CD4-positive, alpha-beta memory T cell (primary cell): ENCODE measurements at regions of chr20 and their contacts with region 1.

Region 1: GRCh38 chr20:6623989-6624388 is 143.5 kb upstream of the BMP2 start:
- DNase-seq: no peak
- H3K4me3 ChIP-seq: no peak overlapping the region
- H3K4me3 Mint-ChIP-seq: no peak overlapping the region
- H3K27ac ChIP-seq: no peak overlapping the region
- H3K27ac Mint-ChIP-seq: no peak overlapping the region
- H3K4me1 ChIP-seq: no peaks in the 10 kb centered on the region
- H3K4me1 Mint-ChIP-seq: no peaks in the 10 kb centered on the region
- H3K27me3 ChIP-seq: no peaks in the 10 kb centered on the region
- H3K27me3 Mint-ChIP-seq: peaks cover 0 to 1% of the 10 kb centered on the region in 2 donors

Region 2: DNA sequence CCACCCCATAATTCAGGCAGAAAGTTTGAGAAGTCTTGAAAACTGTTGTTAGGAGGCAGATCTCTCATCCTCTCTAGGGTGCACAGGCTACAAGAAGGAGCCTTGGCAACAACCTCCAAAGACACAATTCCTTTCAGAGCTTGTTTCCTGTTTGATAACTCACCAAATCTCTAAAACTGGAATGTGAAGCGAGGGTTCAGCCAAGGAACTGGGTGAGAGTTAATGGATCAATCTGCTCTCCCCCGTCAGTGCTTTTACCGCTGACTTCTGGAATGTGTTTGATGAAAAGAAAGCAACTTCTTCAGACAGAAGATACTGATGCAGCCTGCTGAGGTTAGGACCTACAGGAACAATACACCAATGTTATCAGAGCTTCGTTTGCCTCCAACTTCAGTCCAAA is 28.3 kb before region 1 on chr20:
- CTCF ChIA-PET with region 1: no interaction called
- POLR2A ChIA-PET with region 1: no interaction called
- intact Hi-C with region 1: loop called (anchors 1 kb)
- DNase-seq: no peak
- H3K4me3 ChIP-seq: no peak overlapping the region
- H3K4me3 Mint-ChIP-seq: no peak overlapping the region
- H3K27ac ChIP-seq: no peak overlapping the region
- H3K27ac Mint-ChIP-seq: no peak overlapping the region
- H3K4me1 ChIP-seq: no peaks in the 10 kb centered on the region
- H3K4me1 Mint-ChIP-seq: no peaks in the 10 kb centered on the region
- H3K27me3 ChIP-seq: no peaks in the 10 kb centered on the region
- H3K27me3 Mint-ChIP-seq: no peaks in the 10 kb centered on the region

Region 3: GRCh38 chr20:6613280-6613861 is 10.6 kb before region 1 on chr20:
- CTCF ChIA-PET with region 1: no interaction called
- POLR2A ChIA-PET with region 1: no interaction called
- intact Hi-C with region 1: no loop called
- DNase-seq: no peak
- H3K4me3 ChIP-seq: no peak overlapping the region
- H3K4me3 Mint-ChIP-seq: no peak overlapping the region
- H3K27ac ChIP-seq: no peak overlapping the region
- H3K27ac Mint-ChIP-seq: no peak overlapping the region
- H3K4me1 ChIP-seq: no peaks in the 10 kb centered on the region
- H3K4me1 Mint-ChIP-seq: no peaks in the 10 kb centered on the region
- H3K27me3 ChIP-seq: no peaks in the 10 kb centered on the region
- H3K27me3 Mint-ChIP-seq: no peaks in the 10 kb centered on the region